ENCODE measurements at regions of chr9 and their contacts with region 1.

Region 1: GRCh38 chr9:130701056-130702022 is 7.8 kb downstream of the EXOSC2 start:
- DNase-seq: peak; percentile 55 to 89 (median 76)
- ATAC-seq: peak; percentile 81 to 97 (median 94)
- H3K4me3 ChIP-seq: no peak overlapping the region
- H3K27ac ChIP-seq: no peak overlapping the region
- H3K4me1 ChIP-seq: peaks cover 0 to 7% (median 0%) of the 10 kb centered on the region in 3 donors
- H3K27me3 ChIP-seq: no peaks in the 10 kb centered on the region
- CTCF ChIP-seq: peak; percentile 85 to 92 (median 88)

Region 2: GRCh38 chr9:130590305-130590704 is 111.0 kb before region 1 on chr9:
- intact Hi-C with region 1: no loop called
- DNase-seq: peak in 1 of 6 donors; percentile 20
- ATAC-seq: peak; percentile 66 to 90 (median 69)
- H3K4me3 ChIP-seq: no peak overlapping the region
- H3K27ac ChIP-seq: no peak overlapping the region
- H3K4me1 ChIP-seq: peaks cover 11 to 14% (median 11%) of the 10 kb centered on the region in 3 donors
- H3K27me3 ChIP-seq: no peaks in the 10 kb centered on the region
- CTCF ChIP-seq: no peak

Region 3: GRCh38 chr9:130659699-130660248 is 41.6 kb before region 1 on chr9:
- intact Hi-C with region 1: no loop called
- DNase-seq: peak in 1 of 6 donors; percentile 55
- ATAC-seq: no peak
- H3K4me3 ChIP-seq: peak overlapping the region in 2 of 4 donors; percentile 32 to 50
- H3K27ac ChIP-seq: no peak overlapping the region
- H3K4me1 ChIP-seq: peaks cover 0 to 23% (median 16%) of the 10 kb centered on the region in 3 donors
- H3K27me3 ChIP-seq: peaks cover 7 to 68% (median 29%) of the 10 kb centered on the region in 4 donors
- CTCF ChIP-seq: no peak

Region 4: GRCh38 chr9:130682490-130683121 is 18.7 kb before region 1 on chr9:
- intact Hi-C with region 1: no loop called
- DNase-seq: peak; percentile 74 to 92 (median 86)
- ATAC-seq: peak; percentile 78 to 94 (median 90)
- H3K4me3 ChIP-seq: peak overlapping the region in 2 of 4 donors; percentile 49 to 61
- H3K27ac ChIP-seq: no peak overlapping the region
- H3K4me1 ChIP-seq: peaks cover 0 to 7% (median 0%) of the 10 kb centered on the region in 3 donors
- H3K27me3 ChIP-seq: no peaks in the 10 kb centered on the region
- CTCF ChIP-seq: peak; percentile 60 to 82 (median 74)

Region 5: GRCh38 chr9:130866474-130866965 is 165.2 kb after region 1 on chr9:
- intact Hi-C with region 1: loop called (anchors 5 to 10 kb)
- DNase-seq: peak; percentile 73 to 88 (median 76)
- ATAC-seq: peak; percentile 91 to 97 (median 92)
- H3K4me3 ChIP-seq: no peak overlapping the region
- H3K27ac ChIP-seq: no peak overlapping the region
- H3K4me1 ChIP-seq: peaks cover 0 to 4% (median 0%) of the 10 kb centered on the region in 3 donors
- H3K27me3 ChIP-seq: no peaks in the 10 kb centered on the region
- CTCF ChIP-seq: peak; percentile 71 to 88 (median 84)

Region 6: GRCh38 chr9:131046581-131047202 is 345.4 kb after region 1 on chr9:
- intact Hi-C with region 1: loop called in 2 of 3 experiments (anchors 10 kb)
- DNase-seq: peak in 5 of 6 donors; percentile 19 to 88 (median 61)
- ATAC-seq: peak; percentile 88 to 98 (median 96)
- H3K4me3 ChIP-seq: no peak overlapping the region
- H3K27ac ChIP-seq: no peak overlapping the region
- H3K4me1 ChIP-seq: no peaks in the 10 kb centered on the region
- H3K27me3 ChIP-seq: no peaks in the 10 kb centered on the region
- CTCF ChIP-seq: peak; percentile 77 to 88 (median 85)